PC-9 (cell line): ENCODE measurements at regions of chr17 and their contacts with region 1.

Region 1: DNA sequence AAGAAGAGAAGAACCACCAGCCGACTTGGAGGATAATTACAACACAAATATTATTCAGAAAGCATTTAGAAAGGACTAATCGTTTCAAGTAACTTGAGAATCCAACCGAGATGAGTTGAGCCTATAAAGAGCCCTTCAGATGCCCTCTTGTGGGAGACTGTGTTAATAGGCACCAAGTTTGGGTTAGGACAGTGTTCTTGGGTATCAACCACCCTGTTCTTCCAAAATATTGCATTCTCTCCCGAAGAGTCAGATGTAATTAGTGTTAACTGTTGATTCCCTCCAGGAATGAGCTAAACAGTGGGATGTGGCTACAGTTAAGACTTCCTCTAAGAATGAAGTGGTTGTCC is 87.8 kb upstream of the NOL11 start:
- DNase-seq: no peak
- H3K4me3 ChIP-seq: no peak overlapping the region
- H3K27ac ChIP-seq: no peak overlapping the region
- H3K4me1 ChIP-seq: no peaks in the 10 kb centered on the region
- H3K27me3 ChIP-seq: no peaks in the 10 kb centered on the region
- CTCF ChIP-seq: peak; percentile 49

Region 2: GRCh38 chr17:66483906-66484305 is 1146.0 kb before region 1 on chr17:
- CTCF ChIA-PET with region 1: no interaction called
- POLR2A ChIA-PET with region 1: interaction called, 11 read pairs
- intact Hi-C with region 1: no loop called
- DNase-seq: no peak
- H3K4me3 ChIP-seq: no peak overlapping the region
- H3K27ac ChIP-seq: no peak overlapping the region
- H3K4me1 ChIP-seq: no peaks in the 10 kb centered on the region
- H3K27me3 ChIP-seq: no peaks in the 10 kb centered on the region
- CTCF ChIP-seq: no peak